A549 (cell line): ENCODE measurements at regions of chr7 and their contacts with region 1.

Region 1: DNA sequence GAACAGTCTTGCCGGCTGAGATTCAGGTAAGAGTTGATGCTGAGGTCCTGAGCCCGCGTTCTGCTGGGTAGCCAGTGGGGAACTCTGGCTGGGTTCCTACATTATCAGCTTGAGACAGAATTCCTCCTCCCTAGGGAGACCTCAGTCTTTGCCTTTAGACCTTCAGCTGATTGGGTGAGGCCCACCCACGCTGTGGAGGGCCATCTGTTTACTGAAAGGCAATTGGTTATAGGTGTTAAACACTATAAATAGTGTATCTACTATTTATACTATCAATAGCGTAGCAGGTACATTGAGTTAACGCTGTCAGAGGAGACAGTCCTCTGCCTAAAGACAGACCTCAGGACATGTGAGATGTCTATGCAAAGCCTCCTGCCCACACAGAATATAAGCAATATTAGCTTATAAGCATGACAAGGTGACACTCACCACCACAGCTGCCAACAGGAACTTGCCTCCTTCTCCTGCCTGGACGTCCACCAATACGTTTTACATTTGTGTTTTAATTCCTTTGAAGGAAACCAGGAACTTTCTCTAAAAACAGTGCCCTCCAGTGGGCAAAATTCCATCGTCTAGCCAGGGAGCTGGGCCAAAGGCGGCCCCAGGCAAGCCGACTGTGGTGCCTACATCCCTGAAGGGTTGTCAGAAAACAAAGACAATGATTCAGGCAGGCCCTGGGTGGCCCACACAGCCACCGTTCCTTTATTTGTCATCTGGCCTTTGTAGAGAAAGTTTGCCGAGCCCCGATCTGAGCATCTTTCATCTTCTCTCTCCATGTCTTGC is 58.8 kb downstream of the INSIG1 start:
- DNase-seq: peak; percentile 29 to 43
- ATAC-seq: peak; percentile 58 to 83; a peak in 3 of 6 replicates
- H3K4me3 ChIP-seq: no peak overlapping the region
- H3K27ac ChIP-seq: no peak overlapping the region
- H3K4me1 ChIP-seq: no peaks in the 10 kb centered on the region
- CTCF ChIP-seq: peak; percentile 58
- EP300 ChIP-seq: no peak
- POLR2A ChIP-seq: no peak
- RAD21 ChIP-seq: peak; percentile 36 to 44; a peak in 3 of 5 replicates

Region 2: DNA sequence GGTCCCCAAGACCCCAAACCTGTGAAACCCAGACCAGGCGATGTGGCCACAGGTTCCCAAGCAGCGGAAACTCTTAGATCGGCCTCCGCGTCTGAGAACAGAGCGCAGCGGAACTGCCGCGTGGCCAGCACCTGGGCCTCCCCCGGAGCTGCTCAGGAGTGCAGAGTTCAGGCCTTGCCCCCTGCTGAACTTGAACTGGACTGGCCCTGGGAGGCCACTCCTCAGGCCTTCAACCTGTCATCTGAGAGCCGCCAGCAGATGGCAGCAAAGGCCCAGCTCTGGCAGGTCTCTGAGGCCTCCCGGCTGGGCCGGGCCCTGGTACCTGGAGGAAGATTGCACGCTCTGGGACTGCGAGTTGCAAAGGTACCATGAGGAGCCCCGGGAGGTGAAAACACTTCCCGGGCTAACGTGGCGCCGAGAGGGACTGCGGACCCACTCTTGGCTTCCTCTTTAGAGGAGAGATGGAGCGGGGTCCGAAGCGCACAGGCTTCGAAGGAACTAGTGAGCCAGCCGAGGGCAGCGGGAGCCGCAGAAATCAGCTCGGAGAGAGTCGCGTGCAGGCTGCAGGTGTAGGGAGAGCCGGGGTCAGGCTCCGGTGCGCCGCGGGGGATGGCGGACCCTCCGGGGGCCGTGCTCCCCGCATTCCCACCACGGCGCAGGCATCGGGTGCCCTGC is 442.7 kb before region 1 on chr7:
- CTCF ChIA-PET with region 1: interaction called, 37 read pairs
- POLR2A ChIA-PET with region 1: no interaction called
- DNase-seq: peak; percentile 64 to 69
- ATAC-seq: peak; percentile 93 to 99
- H3K4me3 ChIP-seq: no peak overlapping the region
- H3K27ac ChIP-seq: no peak overlapping the region
- H3K4me1 ChIP-seq: no peaks in the 10 kb centered on the region
- CTCF ChIP-seq: peak; percentile 76
- EP300 ChIP-seq: no peak
- POLR2A ChIP-seq: no peak
- RAD21 ChIP-seq: peak; percentile 81 to 83

Region 3: GRCh38 chr7:155371884-155372781 is 15.6 kb after region 1 on chr7:
- CTCF ChIA-PET with region 1: interaction called, 27 read pairs
- POLR2A ChIA-PET with region 1: no interaction called
- DNase-seq: peak; percentile 29 to 51
- ATAC-seq: peak; percentile 61 to 88; a peak in 5 of 6 replicates
- H3K4me3 ChIP-seq: peak overlapping the region; percentile 37
- H3K27ac ChIP-seq: peak overlapping the region in 1 of 2 experiments; percentile 56; a peak in 3 of 6 replicates
- H3K4me1 ChIP-seq: peaks cover 13% of the 10 kb centered on the region; the same call in 2 of the 3 replicates
- CTCF ChIP-seq: peak; percentile 75
- EP300 ChIP-seq: no peak
- POLR2A ChIP-seq: no peak
- RAD21 ChIP-seq: 0 out of 5 replicates have a peak, but pooled peaks of 1 of the 2 experiments have one; percentile 14

Region 4: DNA sequence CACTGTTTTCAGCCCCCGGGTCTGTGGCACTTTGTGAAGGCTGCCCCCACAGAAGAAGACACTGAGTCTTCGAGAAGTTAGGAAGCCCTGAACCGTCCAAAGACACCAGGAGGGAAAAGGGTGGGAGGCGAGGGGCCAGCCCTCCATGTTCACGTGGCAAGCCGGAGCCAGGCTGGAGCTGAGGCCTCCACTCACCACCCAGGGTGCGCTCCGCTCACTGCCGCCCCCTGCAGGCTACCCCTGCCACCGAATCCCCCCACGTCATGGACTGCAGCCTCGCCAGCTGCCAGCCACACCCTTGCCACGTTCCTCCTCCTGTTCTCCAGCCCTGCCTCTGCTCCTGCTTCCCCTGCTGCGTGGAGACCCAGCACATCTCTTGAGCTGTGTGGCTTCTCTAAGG is 42.4 kb after region 1 on chr7:
- CTCF ChIA-PET with region 1: no interaction called
- POLR2A ChIA-PET with region 1: no interaction called
- DNase-seq: peak in 1 of 2 experiments; percentile 45
- ATAC-seq: peak; percentile 53 to 84; a peak in 4 of 6 replicates
- H3K4me3 ChIP-seq: no peak overlapping the region
- H3K27ac ChIP-seq: no peak overlapping the region
- H3K4me1 ChIP-seq: no peaks in the 10 kb centered on the region
- CTCF ChIP-seq: peak; percentile 12; the same call in 1 of the 3 replicates
- EP300 ChIP-seq: no peak
- POLR2A ChIP-seq: no peak
- RAD21 ChIP-seq: no peak

Region 5: GRCh38 chr7:155426543-155427410 is 70.3 kb after region 1 on chr7:
- CTCF ChIA-PET with region 1: no interaction called
- POLR2A ChIA-PET with region 1: no interaction called
- DNase-seq: no peak
- ATAC-seq: no peak
- H3K4me3 ChIP-seq: no peak overlapping the region
- H3K27ac ChIP-seq: no peak overlapping the region
- H3K4me1 ChIP-seq: no peaks in the 10 kb centered on the region
- CTCF ChIP-seq: no peak
- EP300 ChIP-seq: no peak
- POLR2A ChIP-seq: no peak
- RAD21 ChIP-seq: no peak

Region 6: DNA sequence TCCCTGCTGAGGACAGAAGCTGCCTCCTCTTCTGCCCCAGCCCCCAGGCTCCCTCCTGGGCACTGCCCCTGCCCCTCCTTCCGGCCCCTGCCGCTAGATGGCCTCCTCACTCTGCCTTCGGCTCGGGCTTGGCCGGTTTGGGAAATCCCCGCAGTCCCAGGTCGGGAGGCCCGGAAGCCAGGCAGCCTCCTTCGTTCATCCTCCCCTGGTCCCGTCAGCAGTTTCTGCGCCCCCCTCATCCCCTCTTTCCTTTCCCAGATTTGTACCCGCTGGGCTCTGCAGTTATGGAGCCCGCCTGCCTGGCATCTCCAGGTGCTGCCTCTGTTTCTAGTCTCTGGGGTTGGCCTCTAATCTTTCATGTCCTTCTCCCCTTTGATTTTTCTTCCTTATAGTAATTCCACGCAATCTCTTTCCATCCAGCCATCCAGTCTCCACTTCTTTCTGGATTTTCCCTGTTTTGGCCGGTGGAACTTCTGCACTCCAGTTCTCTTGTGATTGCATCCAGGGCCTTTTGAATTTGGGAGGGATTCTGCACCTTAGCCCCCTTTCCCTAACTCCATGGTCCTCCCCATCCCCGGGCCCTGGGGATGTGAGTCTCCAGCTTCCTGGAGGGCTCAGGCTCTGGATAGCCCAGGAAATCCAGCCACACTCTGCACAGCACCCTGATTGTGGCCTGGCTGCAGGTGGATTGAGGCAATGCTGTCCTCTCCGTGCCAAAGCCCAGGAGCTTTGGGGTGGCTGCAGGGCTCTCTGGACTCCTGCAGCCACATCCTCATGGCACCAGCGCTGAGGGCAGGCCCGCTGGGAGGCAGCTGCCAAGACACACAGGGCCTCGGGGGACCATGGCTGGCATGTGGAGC is 459.0 kb after region 1 on chr7:
- CTCF ChIA-PET with region 1: no interaction called
- POLR2A ChIA-PET with region 1: no interaction called
- DNase-seq: peak; percentile 63 to 81
- ATAC-seq: peak; percentile 67 to 87
- H3K4me3 ChIP-seq: no peak overlapping the region
- H3K27ac ChIP-seq: peak overlapping the region; percentile 66 to 88
- H3K4me1 ChIP-seq: peaks cover 24% of the 10 kb centered on the region
- CTCF ChIP-seq: peak; percentile 90
- EP300 ChIP-seq: no peak
- POLR2A ChIP-seq: no peak
- RAD21 ChIP-seq: peak; percentile 96 to 99